Caco-2 (cell line): ENCODE measurements at regions of chr12 and their contacts with region 1.

Region 1: DNA sequence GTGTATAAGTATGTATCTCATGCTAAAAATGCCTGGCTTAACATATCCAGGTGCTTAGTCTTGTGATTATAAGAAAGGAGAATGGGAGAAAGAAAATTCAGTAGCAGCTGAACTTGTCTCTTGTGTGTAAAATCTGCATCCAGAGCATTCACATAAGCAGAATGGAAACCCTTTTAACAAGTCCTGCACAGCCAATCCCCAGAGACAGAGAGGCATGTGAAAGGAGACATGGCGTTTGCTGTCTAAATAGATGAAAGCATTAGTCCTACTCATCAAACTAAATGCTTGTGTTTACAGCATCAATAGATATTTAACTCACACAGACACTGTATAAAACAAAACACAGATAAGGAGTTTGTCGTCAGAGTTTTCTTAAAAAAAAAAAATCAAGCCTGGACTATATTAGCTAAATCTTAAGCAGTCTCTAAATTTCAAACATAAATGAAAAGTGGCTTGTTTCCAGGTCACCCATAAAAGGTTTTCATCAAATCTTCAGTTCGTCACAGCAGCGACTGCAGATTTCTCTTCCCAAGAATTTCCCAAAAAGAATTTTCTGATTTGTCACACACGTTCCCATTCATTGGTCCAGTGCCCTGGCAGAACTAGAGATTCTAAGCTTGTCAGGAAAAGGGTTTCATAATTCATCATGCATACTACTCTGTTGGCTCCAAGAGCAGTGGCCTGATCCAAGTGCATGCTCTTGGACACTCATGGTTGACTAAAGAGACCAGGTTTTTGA is 249.2 kb downstream of the BTG1 start:
- DNase-seq: no peak
- H3K4me3 ChIP-seq: no peak overlapping the region
- H3K4me3 Mint-ChIP-seq: no peak overlapping the region
- H3K27ac Mint-ChIP-seq: no peak overlapping the region
- H3K4me1 ChIP-seq: peaks cover 21% of the 10 kb centered on the region
- H3K4me1 Mint-ChIP-seq: peaks cover 22% of the 10 kb centered on the region
- H3K27me3 ChIP-seq: no peaks in the 10 kb centered on the region
- H3K27me3 Mint-ChIP-seq: no peaks in the 10 kb centered on the region
- CTCF ChIP-seq: no peak

Region 2: GRCh38 chr12:91871751-91872150 is 24.7 kb before region 1 on chr12:
- CTCF ChIA-PET with region 1: no interaction called
- POLR2A ChIA-PET with region 1: no interaction called
- intact Hi-C with region 1: no loop called
- DNase-seq: no peak
- H3K4me3 ChIP-seq: no peak overlapping the region
- H3K4me3 Mint-ChIP-seq: no peak overlapping the region
- H3K27ac Mint-ChIP-seq: no peak overlapping the region
- H3K4me1 ChIP-seq: no peaks in the 10 kb centered on the region
- H3K4me1 Mint-ChIP-seq: peaks cover 8% of the 10 kb centered on the region
- H3K27me3 ChIP-seq: no peaks in the 10 kb centered on the region
- H3K27me3 Mint-ChIP-seq: no peaks in the 10 kb centered on the region
- CTCF ChIP-seq: no peak

Region 3: GRCh38 chr12:91910871-91911388 is 14.5 kb after region 1 on chr12:
- CTCF ChIA-PET with region 1: no interaction called
- POLR2A ChIA-PET with region 1: no interaction called
- intact Hi-C with region 1: no loop called
- DNase-seq: no peak
- H3K4me3 ChIP-seq: no peak overlapping the region
- H3K4me3 Mint-ChIP-seq: no peak overlapping the region
- H3K27ac Mint-ChIP-seq: no peak overlapping the region
- H3K4me1 ChIP-seq: no peaks in the 10 kb centered on the region
- H3K4me1 Mint-ChIP-seq: no peaks in the 10 kb centered on the region
- H3K27me3 ChIP-seq: no peaks in the 10 kb centered on the region
- H3K27me3 Mint-ChIP-seq: no peaks in the 10 kb centered on the region
- CTCF ChIP-seq: no peak

Region 4: GRCh38 chr12:92070054-92070863 is 173.8 kb after region 1 on chr12:
- CTCF ChIA-PET with region 1: no interaction called
- POLR2A ChIA-PET with region 1: no interaction called
- intact Hi-C with region 1: loop called (anchors 2 kb)
- DNase-seq: peak; percentile 76 to 83
- H3K4me3 ChIP-seq: peak overlapping the region; percentile 9; the same call in 1 of the 2 replicates
- H3K4me3 Mint-ChIP-seq: peak overlapping the region; percentile 63
- H3K27ac Mint-ChIP-seq: peak overlapping the region; percentile 86
- H3K4me1 ChIP-seq: peaks cover 40% of the 10 kb centered on the region
- H3K4me1 Mint-ChIP-seq: peaks cover 20% of the 10 kb centered on the region
- H3K27me3 ChIP-seq: no peaks in the 10 kb centered on the region
- H3K27me3 Mint-ChIP-seq: no peaks in the 10 kb centered on the region
- CTCF ChIP-seq: peak in 1 of 2 experiments; percentile 38